SK-N-SH (cell line): ENCODE measurements at regions of chr1 and their contacts with region 1.

Region 1: GRCh38 chr1:160085686-160086455 is 4.5 kb downstream of the KCNJ9 start:
- DNase-seq: peak; percentile 91
- H3K4me3 ChIP-seq: no peak overlapping the region
- H3K27ac ChIP-seq: no peak overlapping the region
- H3K4me1 ChIP-seq: peaks cover 0 to 13% of the 10 kb centered on the region in 2 experiments; a peak in 1 of 4 replicates
- H3K27me3 ChIP-seq: peaks cover 22% of the 10 kb centered on the region; the same call in 1 of the 2 replicates
- CTCF ChIP-seq: peak; percentile 78
- EP300 ChIP-seq: no peak
- RAD21 ChIP-seq: peak; percentile 76

Region 2: GRCh38 chr1:159959451-159959850 is 126.4 kb before region 1 on chr1:
- CTCF ChIA-PET with region 1: no interaction called
- POLR2A ChIA-PET with region 1: no interaction called
- DNase-seq: no peak
- H3K4me3 ChIP-seq: no peak overlapping the region
- H3K27ac ChIP-seq: no peak overlapping the region
- H3K4me1 ChIP-seq: no peaks in the 10 kb centered on the region
- H3K27me3 ChIP-seq: peaks cover 8% of the 10 kb centered on the region; the same call in 1 of the 2 replicates
- CTCF ChIP-seq: no peak
- EP300 ChIP-seq: no peak
- RAD21 ChIP-seq: no peak

Region 3: GRCh38 chr1:160031365-160032164 is 54.3 kb before region 1 on chr1 and contains the start of gene PIGM:
- CTCF ChIA-PET with region 1: interaction called, 37 read pairs
- POLR2A ChIA-PET with region 1: interaction called, 3 read pairs
- DNase-seq: peak; percentile 89
- H3K4me3 ChIP-seq: peak within 1 kb of the TSS; percentile 84 to 93
- H3K27ac ChIP-seq: peak within 1 kb of the TSS in 1 of 2 experiments; percentile 82; a peak in 2 of 4 replicates
- H3K4me1 ChIP-seq: peaks cover 0 to 15% of the 10 kb centered on the region in 2 experiments; a peak in 2 of 4 replicates
- H3K27me3 ChIP-seq: peaks cover 5% of the 10 kb centered on the region; the same call in 1 of the 2 replicates
- CTCF ChIP-seq: no peak
- EP300 ChIP-seq: no peak
- RAD21 ChIP-seq: no peak
- polyA plus RNA-seq, gene PIGM: 4.0 and 5.1 TPM in 2 replicates

Region 4: GRCh38 chr1:160058087-160058486 is 27.8 kb before region 1 on chr1:
- CTCF ChIA-PET with region 1: interaction called, 76 read pairs
- POLR2A ChIA-PET with region 1: no interaction called
- DNase-seq: no peak
- H3K4me3 ChIP-seq: no peak overlapping the region
- H3K27ac ChIP-seq: no peak overlapping the region
- H3K4me1 ChIP-seq: peaks cover 0 to 9% of the 10 kb centered on the region in 2 experiments; a peak in 1 of 4 replicates
- H3K27me3 ChIP-seq: peaks cover 70% of the 10 kb centered on the region
- CTCF ChIP-seq: peak; percentile 19; the same call in 1 of the 2 replicates
- EP300 ChIP-seq: no peak
- RAD21 ChIP-seq: no peak

Region 5: GRCh38 chr1:160070243-160071163 is 15.4 kb before region 1 on chr1:
- CTCF ChIA-PET with region 1: interaction called, 74 read pairs
- POLR2A ChIA-PET with region 1: no interaction called
- DNase-seq: peak; percentile 97
- H3K4me3 ChIP-seq: peak overlapping the region; percentile 52 to 68
- H3K27ac ChIP-seq: no peak overlapping the region
- H3K4me1 ChIP-seq: peaks cover 0 to 9% of the 10 kb centered on the region in 2 experiments; a peak in 1 of 4 replicates
- H3K27me3 ChIP-seq: peaks cover 31% of the 10 kb centered on the region
- CTCF ChIP-seq: no peak
- EP300 ChIP-seq: no peak
- RAD21 ChIP-seq: no peak

Region 6: DNA sequence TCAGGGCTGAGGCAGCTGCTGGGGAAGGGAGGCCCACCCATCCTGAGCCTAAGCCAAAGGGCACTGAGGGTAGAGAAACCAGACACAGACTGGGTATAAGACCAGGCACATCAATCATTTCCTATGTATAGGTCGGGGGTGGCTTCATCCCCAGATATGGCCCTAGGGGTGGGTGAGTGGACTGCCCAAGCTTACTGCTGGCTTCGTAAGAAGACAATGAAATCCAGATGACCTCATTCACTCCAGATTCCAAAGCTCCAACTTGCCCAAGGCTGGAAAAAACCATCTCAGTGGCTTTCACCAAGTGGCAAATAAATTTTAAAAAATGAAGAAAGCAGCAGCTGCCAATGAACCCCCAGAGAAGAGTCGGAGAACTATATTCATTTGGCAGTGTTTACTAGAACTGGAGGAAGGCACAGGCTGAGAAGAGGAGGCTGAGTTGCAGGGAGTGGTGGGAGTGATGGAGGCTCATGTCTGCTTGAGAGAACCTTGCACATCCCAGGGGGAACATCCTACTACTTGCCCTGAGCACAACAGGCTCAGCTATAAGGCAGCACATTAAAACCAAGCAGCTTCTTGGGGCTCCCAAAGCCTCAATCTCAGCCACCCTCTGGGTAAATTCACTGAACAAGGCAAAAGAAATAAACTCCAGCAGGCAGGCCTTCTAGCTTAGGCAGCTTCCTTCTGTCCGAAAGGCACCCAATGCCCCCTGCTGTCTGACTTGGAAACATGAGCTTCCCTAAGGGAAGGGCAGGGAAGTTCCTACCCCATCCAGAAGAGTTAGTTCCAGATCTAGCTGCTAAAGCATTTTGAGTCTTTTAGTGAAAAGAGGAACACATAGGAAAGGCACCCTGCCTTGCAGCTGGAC is 133.4 kb after region 1 on chr1:
- CTCF ChIA-PET with region 1: interaction called, 37 read pairs
- POLR2A ChIA-PET with region 1: no interaction called
- DNase-seq: peak; percentile 55
- H3K4me3 ChIP-seq: no peak overlapping the region; a peak in 1 of 4 replicates
- H3K27ac ChIP-seq: peak overlapping the region; percentile 31 to 55
- H3K4me1 ChIP-seq: peaks cover 11 to 18% of the 10 kb centered on the region in 2 experiments; a peak in 3 of 4 replicates
- H3K27me3 ChIP-seq: no peaks in the 10 kb centered on the region
- CTCF ChIP-seq: peak; percentile 72
- EP300 ChIP-seq: no peak
- RAD21 ChIP-seq: peak; percentile 81